ENCODE measurements at regions of chr18 and their contacts with region 1.

Region 1: DNA sequence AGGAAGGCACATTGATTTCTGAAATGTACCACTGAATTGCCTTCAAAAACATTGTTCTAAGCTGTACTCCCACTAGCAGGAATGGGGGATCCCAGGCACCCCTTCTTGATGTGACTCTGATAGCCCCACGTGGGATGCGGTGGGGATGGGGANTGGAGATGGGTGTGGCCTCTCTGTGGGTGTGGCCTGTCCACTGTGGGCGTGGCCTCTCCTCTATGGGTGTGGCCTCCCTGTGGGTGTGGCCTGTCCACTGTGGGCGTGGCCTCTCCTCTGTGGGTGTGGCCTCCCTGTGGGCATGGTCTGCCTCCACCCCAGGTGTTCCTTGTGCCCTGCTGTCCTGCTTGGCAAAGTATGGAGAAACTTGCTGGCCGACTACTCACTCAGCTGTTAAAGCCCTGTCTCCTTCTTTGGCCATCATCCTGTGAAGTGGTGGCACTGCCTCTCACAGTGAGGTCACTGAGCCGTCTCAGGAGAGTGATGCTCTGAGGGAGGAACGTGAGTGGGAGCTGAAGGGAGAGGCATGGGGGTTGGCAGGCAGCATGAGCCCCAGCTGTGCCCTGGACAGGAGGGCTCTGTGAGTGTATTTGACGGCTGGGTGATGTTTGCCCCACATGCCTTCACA is 6.7 kb upstream of the PARD6G start:
- DNase-seq: peak; percentile 11
- H3K27ac ChIP-seq: no peak overlapping the region
- CTCF ChIP-seq: no peak

Region 2: DNA sequence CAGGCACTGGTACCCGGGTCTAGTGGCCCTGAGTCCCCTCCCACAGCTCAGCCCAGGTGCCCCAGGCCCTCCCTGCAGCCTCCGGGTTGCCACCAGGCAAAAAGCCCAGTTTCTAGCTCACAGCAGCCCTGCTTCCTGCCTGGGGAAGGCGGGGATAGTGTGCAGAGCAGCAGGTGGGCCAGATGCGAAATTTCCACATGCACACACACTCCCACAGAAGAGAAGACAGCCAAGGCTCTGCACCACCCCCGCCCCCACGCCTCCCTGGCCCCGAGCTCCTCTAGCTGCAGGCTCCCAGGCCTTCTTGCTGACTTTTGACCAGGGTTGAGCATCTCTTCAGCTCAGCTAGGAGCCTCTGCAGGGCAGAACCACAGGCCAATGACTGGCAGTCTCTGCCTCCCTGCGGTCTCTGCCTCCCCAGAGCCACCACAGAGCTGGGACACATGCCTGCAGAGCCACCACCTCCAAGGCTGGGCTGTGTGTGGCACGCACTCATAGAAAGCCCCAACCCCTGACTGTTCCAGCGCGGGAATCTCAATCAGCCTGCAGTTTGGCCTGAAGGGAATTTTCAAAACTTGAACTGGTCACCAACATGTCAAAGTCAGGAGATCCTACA is 309.7 kb before region 1 on chr18:
- CTCF ChIA-PET with region 1: no interaction called
- POLR2A ChIA-PET with region 1: no interaction called
- DNase-seq: no peak
- H3K27ac ChIP-seq: peak overlapping the region; percentile 15; the same call in 1 of the 2 replicates
- CTCF ChIP-seq: no peak

Region 3: GRCh38 chr18:80157708-80158343 is 96.2 kb before region 1 on chr18:
- CTCF ChIA-PET with region 1: interaction called, 12 read pairs
- POLR2A ChIA-PET with region 1: no interaction called
- DNase-seq: peak; percentile 52
- H3K27ac ChIP-seq: no peak overlapping the region
- CTCF ChIP-seq: peak; percentile 98